A673 (cell line): ENCODE measurements at regions of chr6 and their contacts with region 1.

Region 1: GRCh38 chr6:8556370-8557018 is 121.1 kb upstream of the SLC35B3 start:
- DNase-seq: peak; percentile 60
- H3K4me3 ChIP-seq: no peak overlapping the region
- H3K27ac ChIP-seq: no peak overlapping the region
- H3K4me1 ChIP-seq: peaks cover 14% of the 10 kb centered on the region
- H3K27me3 ChIP-seq: no peaks in the 10 kb centered on the region
- CTCF ChIP-seq: no peak

Region 2: GRCh38 chr6:8633762-8634161 is 77.3 kb after region 1 on chr6:
- CTCF ChIA-PET with region 1: no interaction called
- POLR2A ChIA-PET with region 1: no interaction called
- intact Hi-C with region 1: loop called (anchors 10 kb)
- DNase-seq: no peak
- H3K4me3 ChIP-seq: no peak overlapping the region
- H3K27ac ChIP-seq: no peak overlapping the region
- H3K4me1 ChIP-seq: no peaks in the 10 kb centered on the region
- H3K27me3 ChIP-seq: no peaks in the 10 kb centered on the region
- CTCF ChIP-seq: no peak

Region 3: DNA sequence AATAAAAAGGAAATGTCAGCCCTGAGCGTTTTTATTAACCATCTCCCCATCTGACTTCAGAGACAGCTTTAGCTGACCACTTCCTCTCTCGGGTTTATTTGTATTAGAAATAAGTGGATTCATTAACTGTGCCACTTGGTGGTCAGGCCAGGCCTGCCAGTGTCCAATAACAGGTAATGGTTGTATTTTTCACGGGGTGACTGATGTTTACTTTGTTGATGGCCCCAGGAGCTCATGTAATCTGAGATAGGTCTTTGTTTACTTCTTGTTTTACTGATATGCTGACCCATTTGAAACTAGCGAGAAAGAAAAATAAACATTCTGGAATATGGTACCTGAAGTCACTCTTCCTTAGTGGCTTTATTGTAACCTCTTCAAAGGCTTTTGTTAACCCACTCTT is 383.1 kb after region 1 on chr6:
- CTCF ChIA-PET with region 1: no interaction called
- POLR2A ChIA-PET with region 1: no interaction called
- intact Hi-C with region 1: no loop called
- DNase-seq: no peak
- H3K4me3 ChIP-seq: no peak overlapping the region
- H3K27ac ChIP-seq: no peak overlapping the region
- H3K4me1 ChIP-seq: no peaks in the 10 kb centered on the region
- H3K27me3 ChIP-seq: no peaks in the 10 kb centered on the region
- CTCF ChIP-seq: no peak